ENCODE measurements at regions of chr20 and their contacts with region 1.

Region 1: GRCh38 chr20:51542571-51543421 is at the start of gene NFATC2:
- DNase-seq: peak in 1 of 2 experiments; percentile 59
- H3K4me3 ChIP-seq: peak within 1 kb of the TSS; percentile 23 to 67 (median 39)
- H3K27ac ChIP-seq: no peak within 1 kb of the TSS
- H3K4me1 ChIP-seq: peaks cover 0 to 10% (median 4%) of the 10 kb centered on the region in 4 experiments; a peak in 4 of 7 replicates
- H3K27me3 ChIP-seq: peaks cover 8 to 30% (median 25%) of the 10 kb centered on the region in 4 experiments
- CTCF ChIP-seq: no peak
- EP300 ChIP-seq: no peak
- POLR2A ChIP-seq: no peak
- RAD21 ChIP-seq: no peak
- total RNA-seq, gene NFATC2: 0.84 and 0.91 TPM in 2 replicates

Region 2: DNA sequence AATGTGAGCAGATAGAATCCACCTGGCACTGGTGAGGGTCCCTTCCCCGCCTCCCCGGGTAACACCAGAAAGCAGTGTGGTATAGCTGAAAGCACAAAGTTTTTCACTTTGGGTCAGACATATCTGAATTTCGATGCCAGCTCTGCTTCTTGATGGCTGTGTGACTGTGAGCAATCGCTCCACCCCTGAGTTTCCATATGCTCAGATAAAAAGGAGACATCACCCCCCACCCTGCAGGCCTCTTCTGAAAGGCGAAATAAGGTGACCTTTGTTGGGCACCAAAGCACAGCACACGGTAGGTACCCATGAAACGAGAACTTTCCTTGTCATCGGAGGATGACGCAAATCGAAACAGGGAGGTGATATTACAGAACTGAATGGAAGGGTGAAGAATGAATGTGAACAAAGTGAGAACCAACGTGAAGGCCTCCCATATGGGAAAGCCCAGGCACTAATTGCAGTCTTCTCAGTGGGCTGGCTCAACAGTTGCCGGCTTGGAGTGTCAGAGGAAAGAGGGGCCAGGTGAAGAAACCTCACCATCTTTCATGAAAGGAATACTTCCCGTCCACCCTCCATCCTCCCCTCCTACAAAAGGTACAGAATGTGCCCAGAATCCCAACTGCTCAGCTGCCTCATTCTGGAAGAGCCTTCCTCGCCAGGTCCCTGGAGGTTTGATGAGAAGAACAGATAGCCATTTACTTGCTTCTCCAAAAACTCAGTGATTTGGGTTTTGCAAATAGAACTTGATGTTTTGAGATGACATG is 62.1 kb before region 1 on chr20:
- CTCF ChIA-PET with region 1: no interaction called
- POLR2A ChIA-PET with region 1: no interaction called
- DNase-seq: no peak
- H3K4me3 ChIP-seq: no peak overlapping the region
- H3K27ac ChIP-seq: no peak overlapping the region
- H3K4me1 ChIP-seq: no peaks in the 10 kb centered on the region
- H3K27me3 ChIP-seq: no peaks in the 10 kb centered on the region
- CTCF ChIP-seq: no peak
- EP300 ChIP-seq: no peak
- POLR2A ChIP-seq: no peak
- RAD21 ChIP-seq: no peak

Region 3: GRCh38 chr20:51562332-51563155 is 19.7 kb after region 1 on chr20:
- CTCF ChIA-PET with region 1: interaction called, 11 read pairs
- POLR2A ChIA-PET with region 1: no interaction called
- DNase-seq: peak in 1 of 2 experiments; percentile 85
- H3K4me3 ChIP-seq: peak overlapping the region; percentile 29 to 64 (median 62)
- H3K27ac ChIP-seq: no peak overlapping the region
- H3K4me1 ChIP-seq: peaks cover 0 to 12% (median 4%) of the 10 kb centered on the region in 4 experiments; a peak in 5 of 7 replicates
- H3K27me3 ChIP-seq: peaks cover 20 to 57% (median 49%) of the 10 kb centered on the region in 4 experiments
- CTCF ChIP-seq: peak; percentile 10 to 54 (median 15)
- EP300 ChIP-seq: no peak
- POLR2A ChIP-seq: peak in 1 of 2 experiments; percentile 21; a peak in 1 of 3 replicates
- RAD21 ChIP-seq: peak; percentile 28 to 44; a peak in 3 of 4 replicates

Measured in H1 (cell line).